Dendritic cell treated with granulocyte-macrophage colony-stimulating factor and Interleukin-4, amounts not matched to agents 40 ng/mL and 50 ng/mL, for 4 days (primary cell): ENCODE measurements at regions of chr6 and their contacts with region 1.

Region 1: GRCh38 chr6:6556738-6557505 is 31.6 kb upstream of the LY86 start:
- H3K4me3 Mint-ChIP-seq: no peak overlapping the region
- H3K27ac Mint-ChIP-seq: peak overlapping the region; percentile 63
- H3K4me1 Mint-ChIP-seq: peaks cover 33% of the 10 kb centered on the region
- H3K27me3 Mint-ChIP-seq: no peaks in the 10 kb centered on the region

Region 2: GRCh38 chr6:6599468-6599873 is 42.5 kb after region 1 on chr6:
- intact Hi-C with region 1: loop called (anchors 5 kb)
- H3K4me3 Mint-ChIP-seq: no peak overlapping the region
- H3K27ac Mint-ChIP-seq: peak overlapping the region; percentile 73
- H3K4me1 Mint-ChIP-seq: peaks cover 61% of the 10 kb centered on the region
- H3K27me3 Mint-ChIP-seq: no peaks in the 10 kb centered on the region

Region 3: GRCh38 chr6:6635869-6636268 is 78.9 kb after region 1 on chr6:
- intact Hi-C with region 1: loop called (anchors 5 kb)
- H3K4me3 Mint-ChIP-seq: no peak overlapping the region
- H3K27ac Mint-ChIP-seq: peak overlapping the region; percentile 83
- H3K4me1 Mint-ChIP-seq: peaks cover 50% of the 10 kb centered on the region
- H3K27me3 Mint-ChIP-seq: no peaks in the 10 kb centered on the region

Region 4: GRCh38 chr6:6646859-6647258 is 89.9 kb after region 1 on chr6:
- intact Hi-C with region 1: no loop called
- H3K4me3 Mint-ChIP-seq: no peak overlapping the region
- H3K27ac Mint-ChIP-seq: no peak overlapping the region
- H3K4me1 Mint-ChIP-seq: peaks cover 29% of the 10 kb centered on the region
- H3K27me3 Mint-ChIP-seq: no peaks in the 10 kb centered on the region

Region 5: DNA sequence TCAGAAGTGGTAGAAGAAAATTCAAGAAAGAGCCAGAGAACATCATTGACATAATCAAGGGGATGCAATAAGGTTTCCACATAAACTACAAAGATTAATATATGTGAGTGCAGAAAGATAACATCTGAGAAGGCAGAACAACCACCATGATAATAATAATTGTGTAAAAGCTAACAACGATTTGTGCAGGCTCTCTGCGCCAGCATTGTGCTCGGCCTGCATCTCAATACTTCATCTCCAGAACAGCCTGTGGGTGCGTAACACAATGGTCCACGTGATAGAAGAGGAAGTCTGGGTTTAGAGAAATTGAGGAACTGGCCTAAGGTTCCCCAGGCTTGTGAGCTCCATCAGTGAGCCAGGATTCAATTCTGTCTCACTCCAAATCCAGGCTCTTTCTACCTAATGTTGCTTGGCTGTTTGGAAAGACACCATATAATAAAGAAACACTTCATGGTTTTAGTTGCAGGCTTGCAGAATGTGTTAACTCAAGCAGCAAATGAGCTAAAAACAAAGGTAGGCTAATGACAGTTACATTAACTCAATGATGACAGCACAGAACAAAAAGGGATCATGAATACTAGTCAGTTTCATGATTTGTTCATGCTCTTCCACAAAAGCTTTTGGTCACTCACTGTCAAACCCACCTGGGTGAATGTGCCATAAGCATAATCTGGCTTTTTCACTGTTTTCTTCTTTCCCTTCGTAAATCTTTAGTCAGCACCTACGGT is 102.8 kb after region 1 on chr6:
- intact Hi-C with region 1: loop called (anchors 5 kb)
- H3K4me3 Mint-ChIP-seq: no peak overlapping the region
- H3K27ac Mint-ChIP-seq: peak overlapping the region; percentile 89
- H3K4me1 Mint-ChIP-seq: peaks cover 92% of the 10 kb centered on the region
- H3K27me3 Mint-ChIP-seq: no peaks in the 10 kb centered on the region